ENCODE measurements at regions of chr1 and their contacts with region 1.

Region 1: DNA sequence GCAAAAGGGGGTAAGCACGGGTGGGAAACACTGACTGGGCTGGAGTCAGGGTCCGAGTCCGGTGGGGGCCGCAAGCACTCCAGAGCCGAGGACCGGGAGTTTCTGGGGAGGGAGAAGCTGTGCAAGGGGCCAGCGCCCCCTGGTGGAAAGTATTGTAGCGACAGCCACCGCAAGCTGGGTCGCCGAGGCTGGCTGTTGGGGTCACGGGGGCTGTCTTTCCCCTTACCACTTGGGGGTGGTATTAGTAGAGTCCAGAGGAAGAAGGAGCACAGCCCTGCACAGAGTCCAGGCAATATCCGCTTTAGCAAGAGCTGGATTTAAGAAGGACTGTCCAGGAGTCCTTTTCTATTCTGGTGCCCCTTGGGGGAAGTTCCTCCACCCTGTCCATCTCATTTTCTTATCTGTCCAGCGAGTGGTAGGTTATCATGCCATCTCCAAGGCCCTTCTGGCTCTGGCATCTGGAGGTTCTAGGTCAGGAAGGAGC is 17.9 kb upstream of the ETV3 start:
- DNase-seq: no peak
- H3K4me3 ChIP-seq: peak overlapping the region; percentile 32; the same call in 1 of the 2 replicates
- CTCF ChIP-seq: peak; percentile 93

Region 2: DNA sequence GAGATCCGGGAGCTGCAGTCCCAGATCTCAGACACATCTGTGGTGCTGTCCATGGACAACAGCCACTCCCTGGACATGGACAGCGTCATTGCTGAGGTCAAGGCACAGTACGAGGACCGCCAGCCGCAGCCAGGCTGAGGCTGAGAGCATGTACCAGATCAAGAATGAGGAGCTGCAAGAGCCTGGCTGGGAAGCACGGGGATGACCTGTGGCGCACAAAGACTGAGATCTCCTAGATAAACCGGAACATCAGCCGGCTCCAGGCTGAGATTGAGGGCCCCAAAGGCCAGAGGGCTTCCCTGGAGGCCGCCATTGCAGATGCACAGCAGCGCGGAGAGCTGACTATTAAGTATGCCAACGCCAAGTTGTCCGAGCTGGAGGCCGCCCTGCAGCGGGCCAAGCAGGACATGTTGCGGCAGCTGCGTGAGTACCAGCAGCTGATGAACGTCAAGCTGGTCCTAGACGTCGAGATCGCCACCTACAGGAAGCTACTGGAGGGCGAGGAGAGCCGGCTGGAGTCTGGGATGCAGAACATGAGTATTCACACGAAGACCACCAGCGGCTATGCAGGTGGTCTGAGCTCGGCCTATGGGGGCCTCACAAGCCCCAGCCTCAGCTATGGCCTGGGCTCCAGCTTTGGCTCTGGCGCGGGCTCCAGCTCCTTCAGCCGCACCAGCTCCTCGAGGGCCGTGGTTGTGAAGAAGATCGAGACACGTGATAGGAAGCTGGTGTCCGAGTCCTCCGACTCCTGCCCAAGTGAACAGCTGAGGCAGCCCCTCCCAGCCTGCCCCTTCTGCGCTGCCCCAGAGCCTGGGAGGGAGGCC is 81.9 kb before region 1 on chr1:
- CTCF ChIA-PET with region 1: interaction called, 19 read pairs
- POLR2A ChIA-PET with region 1: no interaction called
- DNase-seq: no peak
- H3K4me3 ChIP-seq: no peak overlapping the region
- CTCF ChIP-seq: peak; percentile 72

Region 3: DNA sequence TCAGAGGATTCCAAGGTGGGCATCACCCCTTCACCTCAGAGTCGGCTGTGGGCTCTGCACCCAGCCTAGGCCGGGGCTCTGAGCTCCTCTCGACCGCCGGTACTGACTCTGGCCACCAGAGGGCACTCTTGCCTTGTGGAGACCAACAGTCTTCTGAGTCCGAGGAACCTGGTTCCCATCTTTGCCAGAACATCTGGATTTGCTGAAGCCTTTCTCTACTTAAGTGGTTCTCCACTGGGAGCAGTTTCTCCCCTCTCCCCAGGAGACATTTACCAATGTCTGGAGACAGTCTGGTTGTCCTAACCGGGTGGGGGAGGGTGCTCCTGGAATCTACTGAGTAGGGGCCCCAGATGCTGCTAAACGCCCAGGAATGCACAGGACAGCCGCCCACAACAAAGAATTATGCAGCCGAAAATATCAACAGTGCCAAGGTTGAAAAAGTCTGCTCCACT is 65.9 kb before region 1 on chr1:
- CTCF ChIA-PET with region 1: interaction called, 478 read pairs
- POLR2A ChIA-PET with region 1: interaction called, 11 read pairs
- DNase-seq: peak; percentile 60
- H3K4me3 ChIP-seq: no peak overlapping the region
- CTCF ChIP-seq: peak; percentile 93

Region 4: GRCh38 chr1:157105988-157106812 is 49.9 kb before region 1 on chr1:
- CTCF ChIA-PET with region 1: interaction called, 50 read pairs
- POLR2A ChIA-PET with region 1: interaction called, 3 read pairs
- DNase-seq: peak; percentile 74
- H3K4me3 ChIP-seq: no peak overlapping the region
- CTCF ChIP-seq: no peak

Region 5: DNA sequence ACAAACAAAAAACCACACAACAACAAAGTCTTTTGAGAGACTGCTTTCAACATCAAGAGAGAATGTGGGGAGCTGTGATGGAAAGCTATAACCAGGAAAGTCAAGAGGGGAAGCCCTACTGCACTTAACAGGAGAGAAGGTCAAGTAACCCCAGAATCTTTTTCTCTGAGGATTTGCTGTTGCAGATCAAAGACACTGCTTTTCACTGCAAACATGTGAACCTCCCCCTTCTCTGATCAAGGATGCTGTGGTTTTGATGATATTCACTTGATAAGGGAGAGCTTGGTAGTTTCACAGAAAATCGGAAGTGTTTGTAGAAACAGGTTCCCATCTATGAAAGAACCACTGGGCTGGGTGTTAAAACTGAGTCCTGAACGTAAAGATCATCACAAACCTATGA is 22.7 kb before region 1 on chr1:
- CTCF ChIA-PET with region 1: interaction called, 117 read pairs
- POLR2A ChIA-PET with region 1: interaction called, 6 read pairs
- DNase-seq: no peak
- H3K4me3 ChIP-seq: no peak overlapping the region
- CTCF ChIP-seq: no peak

Region 6: GRCh38 chr1:157170677-157171515 is 14.8 kb after region 1 on chr1:
- CTCF ChIA-PET with region 1: interaction called, 23 read pairs
- POLR2A ChIA-PET with region 1: no interaction called
- DNase-seq: no peak
- H3K4me3 ChIP-seq: no peak overlapping the region
- CTCF ChIP-seq: peak; percentile 55